Pancreas (tissue), 10 donors: ENCODE measurements at regions of chr22 and their contacts with region 1.

Region 1: GRCh38 chr22:35627264-35628041 is 10.3 kb upstream of the MB start:
- DNase-seq: peak; percentile 76 to 88 (median 82)
- ATAC-seq: peak; percentile 79 to 87 (median 86)
- H3K4me3 ChIP-seq: peak overlapping the region; percentile 23 to 60 (median 35)
- H3K27ac ChIP-seq: peak overlapping the region; percentile 81 to 97 (median 93)
- H3K4me1 ChIP-seq: peaks cover 0 to 9% (median 0%) of the 10 kb centered on the region in 3 donors
- H3K27me3 ChIP-seq: no peaks in the 10 kb centered on the region
- CTCF ChIP-seq: peak in 1 of 4 donors; percentile 15

Region 2: GRCh38 chr22:35921777-35922176 is 294.3 kb after region 1 on chr22:
- intact Hi-C with region 1: loop called in 2 of 3 experiments (anchors 10 kb)
- DNase-seq: peak in 4 of 6 donors; percentile 39 to 75 (median 63)
- ATAC-seq: peak; percentile 88 to 98 (median 96)
- H3K4me3 ChIP-seq: no peak overlapping the region
- H3K27ac ChIP-seq: peak overlapping the region in 2 of 4 donors; percentile 39 to 53
- H3K4me1 ChIP-seq: peaks cover 0 to 4% (median 0%) of the 10 kb centered on the region in 3 donors
- H3K27me3 ChIP-seq: no peaks in the 10 kb centered on the region
- CTCF ChIP-seq: peak in 3 of 4 donors; percentile 27 to 54 (median 32)

Region 3: GRCh38 chr22:36110306-36110881 is 482.9 kb after region 1 on chr22:
- intact Hi-C with region 1: loop called in 1 of 3 experiments (anchors 10 kb)
- DNase-seq: peak in 1 of 6 donors; percentile 46
- ATAC-seq: peak in 1 of 4 donors; percentile 25
- H3K4me3 ChIP-seq: no peak overlapping the region
- H3K27ac ChIP-seq: no peak overlapping the region
- H3K4me1 ChIP-seq: no peaks in the 10 kb centered on the region
- H3K27me3 ChIP-seq: no peaks in the 10 kb centered on the region
- CTCF ChIP-seq: no peak

Region 4: DNA sequence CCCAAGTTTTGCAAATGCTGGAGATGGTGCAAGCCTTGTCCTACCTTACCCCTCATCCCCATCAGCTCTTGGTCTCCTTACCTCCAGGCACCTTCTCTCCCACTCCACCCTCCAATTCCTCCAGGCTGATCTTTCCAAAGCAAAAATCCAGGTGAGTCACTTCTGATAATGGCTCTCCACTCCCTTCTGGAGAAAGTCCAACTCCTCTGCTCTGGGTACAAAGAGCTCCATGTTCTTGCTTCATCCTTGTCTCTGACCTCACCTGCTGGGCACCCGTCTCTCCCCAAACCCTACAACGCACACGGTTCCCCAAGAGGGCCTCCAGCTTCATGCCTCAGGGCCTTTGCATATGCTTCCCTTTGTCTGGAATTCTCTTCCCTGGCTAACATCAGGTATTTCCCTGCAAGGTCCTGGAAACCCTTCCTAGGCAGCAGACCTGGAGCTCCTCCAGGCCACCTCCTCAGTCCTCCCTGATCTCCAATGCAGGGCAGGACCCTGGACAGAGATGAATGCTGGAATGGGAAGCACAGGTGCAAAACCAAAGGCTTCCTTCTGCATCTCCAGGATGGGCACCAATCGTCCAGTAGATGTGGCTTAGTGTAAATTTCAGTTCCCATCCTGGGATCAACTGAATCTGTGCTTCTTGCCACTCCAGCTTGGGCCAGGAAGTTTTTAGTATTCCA is 1125.8 kb after region 1 on chr22:
- intact Hi-C with region 1: no loop called
- DNase-seq: peak in 1 of 6 donors; percentile 35
- ATAC-seq: peak in 2 of 4 donors; percentile 31 to 46
- H3K4me3 ChIP-seq: no peak overlapping the region
- H3K27ac ChIP-seq: no peak overlapping the region
- H3K4me1 ChIP-seq: no peaks in the 10 kb centered on the region
- H3K27me3 ChIP-seq: no peaks in the 10 kb centered on the region
- CTCF ChIP-seq: no peak